BJ (cell line): ENCODE measurements at regions of chr1 and their contacts with region 1.

Region 1: DNA sequence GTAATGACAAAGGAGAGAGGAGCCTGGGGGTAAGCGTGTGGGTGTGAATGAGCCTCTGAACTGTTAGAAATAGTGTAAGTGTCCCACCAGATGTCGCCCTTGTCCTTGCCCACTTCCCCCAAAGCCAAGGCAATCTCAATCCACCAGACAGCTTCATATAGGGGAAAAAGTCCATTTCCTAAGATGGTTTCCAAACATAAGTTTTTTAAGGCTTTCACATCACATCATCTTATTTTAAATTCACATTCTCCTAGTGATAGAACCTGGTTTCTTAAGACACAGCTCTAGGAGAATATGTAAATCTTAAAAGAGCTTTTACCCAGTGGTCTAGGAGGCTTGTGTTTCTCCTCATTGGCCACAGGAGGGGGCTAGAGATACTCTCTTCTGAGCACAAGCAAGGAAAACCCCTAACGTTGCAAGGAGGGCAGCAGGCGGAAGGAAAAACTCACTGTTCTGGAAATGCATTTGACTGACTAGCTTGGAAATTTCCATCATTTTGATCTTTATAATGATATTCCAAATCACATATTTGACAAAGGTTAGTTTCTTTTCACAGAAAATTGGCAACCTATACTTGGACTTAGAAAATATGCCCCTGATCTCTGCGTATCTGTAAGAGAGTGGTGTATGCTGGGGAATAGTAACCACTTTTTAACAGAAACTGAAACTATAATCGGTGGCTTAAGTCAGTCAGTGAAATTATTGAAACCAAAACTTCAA is 51.9 kb upstream of the LPAR3 start:
- DNase-seq: peak; percentile 51
- H3K4me3 ChIP-seq: peak overlapping the region; percentile 30
- H3K27me3 ChIP-seq: no peaks in the 10 kb centered on the region; the same call in 1 of the 2 replicates
- CTCF ChIP-seq: peak; percentile 88

Region 2: DNA sequence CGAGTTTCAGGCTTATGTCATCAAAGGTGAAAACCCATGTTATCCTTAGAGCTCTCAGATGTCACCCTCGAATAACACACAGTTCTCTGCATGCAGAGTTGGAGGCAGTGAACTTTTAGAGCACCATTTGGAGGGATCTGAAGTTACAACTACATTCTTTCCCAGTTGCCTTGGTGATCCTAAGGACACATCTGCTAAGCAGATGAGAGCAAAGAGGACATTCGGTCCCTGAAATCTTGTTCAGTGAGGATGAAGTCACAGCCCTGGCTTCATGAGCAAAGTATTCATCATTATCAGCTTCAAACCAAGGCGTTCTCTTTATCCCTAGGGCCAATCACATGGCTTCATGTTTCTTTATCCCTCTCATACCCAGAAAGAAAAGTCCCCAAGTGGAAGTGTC is 75.1 kb after region 1 on chr1:
- CTCF ChIA-PET with region 1: interaction called, 85 read pairs
- POLR2A ChIA-PET with region 1: no interaction called
- DNase-seq: peak; percentile 91
- H3K4me3 ChIP-seq: no peak overlapping the region
- H3K27me3 ChIP-seq: no peaks in the 10 kb centered on the region; the same call in none of the 2 replicates
- CTCF ChIP-seq: no peak

Region 3: DNA sequence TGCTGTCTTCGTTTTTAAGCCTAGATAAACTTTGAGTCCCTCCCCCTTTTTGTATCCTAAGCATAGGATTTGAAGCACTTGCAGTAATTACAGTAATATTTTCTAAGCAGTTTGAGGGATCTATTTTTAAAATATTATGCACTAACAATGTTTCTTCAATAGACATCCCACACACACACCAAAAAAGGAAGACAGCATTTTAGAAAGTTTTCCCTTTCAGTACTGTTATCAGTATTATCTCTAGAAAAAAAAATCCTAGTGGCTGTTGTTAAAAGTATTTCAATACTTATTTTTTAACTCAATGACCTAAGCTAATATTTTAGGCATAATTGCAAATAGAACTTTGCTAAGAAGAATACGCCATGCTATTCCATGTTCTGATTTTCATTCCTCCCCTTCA is 88.3 kb after region 1 on chr1:
- CTCF ChIA-PET with region 1: interaction called, 100 read pairs
- POLR2A ChIA-PET with region 1: no interaction called
- DNase-seq: no peak
- H3K4me3 ChIP-seq: no peak overlapping the region
- H3K27me3 ChIP-seq: no peaks in the 10 kb centered on the region
- CTCF ChIP-seq: no peak

Region 4: DNA sequence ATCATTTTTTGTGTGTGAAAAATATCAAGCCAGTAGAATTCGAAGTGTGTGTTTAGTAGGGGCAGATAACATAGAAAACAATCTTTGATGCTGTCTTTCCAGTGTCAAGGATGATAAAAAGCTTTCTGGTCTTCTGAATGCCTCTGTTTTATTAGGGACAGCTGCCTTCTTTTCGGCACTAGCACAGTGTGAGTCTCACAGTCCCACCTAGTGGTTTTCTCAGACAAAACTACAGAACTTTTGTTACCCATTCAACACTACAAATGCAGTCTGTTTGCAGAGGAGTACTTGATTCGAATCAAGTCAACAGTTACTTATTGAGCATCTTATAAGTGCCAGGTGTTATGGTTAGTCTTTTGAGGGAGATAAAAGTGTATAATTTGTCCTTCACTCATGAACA is 134.0 kb after region 1 on chr1:
- CTCF ChIA-PET with region 1: interaction called, 10 read pairs
- POLR2A ChIA-PET with region 1: no interaction called
- DNase-seq: no peak
- H3K4me3 ChIP-seq: no peak overlapping the region
- H3K27me3 ChIP-seq: no peaks in the 10 kb centered on the region
- CTCF ChIP-seq: peak; percentile 35

Region 5: GRCh38 chr1:85200870-85201339 is 256.0 kb after region 1 on chr1 and contains the start of gene SYDE2:
- CTCF ChIA-PET with region 1: no interaction called
- POLR2A ChIA-PET with region 1: no interaction called
- DNase-seq: no peak
- H3K4me3 ChIP-seq: peak within 1 kb of the TSS; percentile 64
- H3K27me3 ChIP-seq: no peaks in the 10 kb centered on the region
- CTCF ChIP-seq: no peak
- polyA plus RNA-seq, gene SYDE2: 4.4 and 6.1 TPM in 2 replicates

Region 6: GRCh38 chr1:85259118-85259911 is 314.4 kb after region 1 on chr1 and contains the start of gene C1orf52:
- CTCF ChIA-PET with region 1: interaction called, 30 read pairs
- POLR2A ChIA-PET with region 1: no interaction called
- DNase-seq: peak; percentile 44
- H3K4me3 ChIP-seq: peak within 1 kb of the TSS; percentile 100
- H3K27me3 ChIP-seq: no peaks in the 10 kb centered on the region
- CTCF ChIP-seq: peak; percentile 98
- polyA plus RNA-seq, gene C1orf52: 29.6 and 30.5 TPM in 2 replicates

Region 7: GRCh38 chr1:85448358-85448757 is 503.4 kb after region 1 on chr1:
- CTCF ChIA-PET with region 1: no interaction called
- POLR2A ChIA-PET with region 1: no interaction called
- DNase-seq: no peak
- H3K4me3 ChIP-seq: no peak overlapping the region
- H3K27me3 ChIP-seq: no peaks in the 10 kb centered on the region
- CTCF ChIP-seq: no peak

Region 8: GRCh38 chr1:86156566-86157455 is 1211.9 kb after region 1 on chr1 and contains the start of gene COL24A1:
- CTCF ChIA-PET with region 1: no interaction called
- POLR2A ChIA-PET with region 1: no interaction called
- DNase-seq: no peak
- H3K4me3 ChIP-seq: peak within 1 kb of the TSS; percentile 14
- H3K27me3 ChIP-seq: no peaks in the 10 kb centered on the region
- CTCF ChIP-seq: no peak
- polyA plus RNA-seq, gene COL24A1: 0.28 and 0.59 TPM in 2 replicates